ENCODE measurements at regions of chr5 and their contacts with region 1.

Region 1: DNA sequence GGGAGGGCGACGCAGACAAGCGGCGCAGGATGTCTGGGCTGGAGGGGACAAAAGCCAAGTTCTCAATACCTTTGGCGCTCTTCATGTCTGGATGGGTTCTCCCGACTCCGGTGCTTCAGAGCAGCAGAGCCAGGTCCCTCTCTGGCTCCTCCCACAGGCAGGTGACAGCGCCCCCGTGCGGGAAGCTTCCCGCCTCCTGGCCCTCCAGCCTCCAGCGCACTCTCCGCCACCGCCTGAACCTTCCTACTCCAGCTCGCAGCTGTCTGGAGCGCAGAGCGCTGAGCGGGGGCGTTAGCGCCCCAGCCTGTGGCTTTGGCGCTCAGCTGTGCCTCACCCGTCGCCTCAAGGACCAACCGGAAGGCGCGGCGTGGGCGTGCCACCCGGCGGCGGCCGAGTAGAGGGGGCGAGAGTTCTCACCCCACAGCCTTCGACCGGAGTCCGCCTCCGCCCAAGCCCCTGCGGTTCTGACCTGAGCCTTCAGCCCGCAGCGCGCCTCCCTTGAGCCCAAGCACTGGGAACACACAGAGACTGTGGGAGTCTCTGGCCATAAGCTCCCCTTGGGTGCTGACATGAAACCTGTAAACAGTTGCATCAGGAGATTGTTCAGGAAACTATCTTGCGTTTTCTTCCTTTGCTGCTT is at the start of gene SLCO4C1:
- H3K4me3 Mint-ChIP-seq: peak within 1 kb of the TSS; percentile 84
- H3K27ac Mint-ChIP-seq: peak within 1 kb of the TSS; percentile 78
- H3K4me1 Mint-ChIP-seq: peaks cover 34% of the 10 kb centered on the region
- H3K27me3 Mint-ChIP-seq: peaks cover 10% of the 10 kb centered on the region

Region 2: GRCh38 chr5:102231693-102232619 is 64.3 kb before region 1 on chr5:
- intact Hi-C with region 1: no loop called
- H3K4me3 Mint-ChIP-seq: no peak overlapping the region
- H3K27ac Mint-ChIP-seq: peak overlapping the region; percentile 38
- H3K4me1 Mint-ChIP-seq: peaks cover 16% of the 10 kb centered on the region
- H3K27me3 Mint-ChIP-seq: no peaks in the 10 kb centered on the region

Region 3: GRCh38 chr5:102523541-102524175 is 227.4 kb after region 1 on chr5:
- intact Hi-C with region 1: loop called (anchors 10 kb)
- H3K4me3 Mint-ChIP-seq: no peak overlapping the region
- H3K27ac Mint-ChIP-seq: no peak overlapping the region
- H3K4me1 Mint-ChIP-seq: peaks cover 11% of the 10 kb centered on the region
- H3K27me3 Mint-ChIP-seq: peaks cover 17% of the 10 kb centered on the region

Region 4: DNA sequence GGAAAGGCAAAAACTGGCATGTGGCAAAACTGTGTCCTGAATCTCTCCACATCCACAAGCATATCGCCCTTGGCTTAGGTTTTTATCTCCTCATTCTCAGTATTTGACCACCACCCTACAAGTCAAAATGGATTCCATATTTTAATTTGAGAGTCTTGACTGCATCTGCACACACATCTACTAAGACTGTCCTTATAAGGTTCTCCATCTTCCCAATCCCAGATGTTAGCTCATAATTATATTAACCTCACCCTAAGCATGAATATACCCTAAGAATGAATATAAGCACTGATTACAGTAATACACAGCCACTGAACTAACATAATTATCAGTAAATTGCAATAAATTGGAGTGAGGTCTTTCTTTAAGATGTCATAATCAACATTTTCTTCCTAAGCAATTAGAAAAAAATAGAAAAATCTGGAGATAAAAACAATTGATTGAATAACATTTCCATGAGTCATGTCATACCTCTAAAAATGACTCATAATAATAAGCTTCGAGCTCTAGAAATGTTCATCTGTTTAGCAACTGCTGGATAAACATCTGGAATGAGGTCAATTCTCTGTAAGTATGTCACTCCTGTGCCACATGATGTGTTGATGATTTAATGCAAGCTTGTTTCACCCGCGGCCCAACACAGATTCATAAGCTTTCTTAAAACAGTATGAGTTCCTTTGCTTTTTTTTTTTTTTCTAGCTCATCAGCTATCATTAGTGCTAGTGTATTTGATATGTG is 419.0 kb after region 1 on chr5:
- intact Hi-C with region 1: no loop called
- H3K4me3 Mint-ChIP-seq: no peak overlapping the region
- H3K27ac Mint-ChIP-seq: no peak overlapping the region
- H3K4me1 Mint-ChIP-seq: no peaks in the 10 kb centered on the region
- H3K27me3 Mint-ChIP-seq: no peaks in the 10 kb centered on the region

Measured in dendritic cell treated with granulocyte-macrophage colony-stimulating factor and Interleukin-4, amounts not matched to agents 40 ng/mL and 50 ng/mL, for 4 days (primary cell).